Vagina (tissue), 2 donors: ENCODE measurements at regions of chr16 and their contacts with region 1.

Region 1: DNA sequence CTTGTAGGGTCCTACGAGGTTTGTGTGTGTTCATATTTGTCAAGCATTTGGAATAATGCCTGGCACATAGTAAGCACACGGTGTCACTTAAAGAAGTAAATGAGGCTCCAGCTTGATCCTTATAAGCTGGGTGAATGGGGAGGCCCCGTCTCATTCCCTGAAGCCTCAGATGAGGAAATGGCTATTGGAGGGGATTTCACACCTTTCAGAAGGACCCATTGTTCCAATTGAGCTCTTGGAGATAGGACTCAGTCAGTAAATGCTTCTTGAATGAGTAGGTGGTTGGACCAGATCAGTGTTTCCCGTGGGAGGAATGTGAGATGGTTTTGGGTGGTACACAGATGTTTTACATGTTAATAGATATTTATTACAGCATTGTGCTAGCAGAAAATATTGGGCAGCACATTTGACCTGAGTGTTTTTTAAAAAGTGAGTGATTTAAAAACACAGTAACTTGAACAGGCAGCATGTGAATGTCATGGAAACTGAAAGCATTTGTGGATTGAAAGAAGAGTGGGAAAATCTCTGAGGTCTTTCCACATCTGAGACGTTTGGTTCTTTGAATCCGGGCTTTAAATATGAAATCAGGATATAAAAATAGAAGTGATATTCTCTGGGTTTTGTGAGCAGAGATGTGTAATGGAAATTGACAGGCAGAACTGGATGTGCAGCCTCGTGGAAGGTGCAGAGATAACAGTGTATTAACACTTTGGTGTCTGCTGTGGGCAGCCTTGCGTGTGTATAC is 36.4 kb upstream of the ARHGAP17 start:
- DNase-seq: no peak
- H3K4me3 ChIP-seq: no peak overlapping the region
- H3K27ac ChIP-seq: peak overlapping the region; percentile 48
- H3K4me1 ChIP-seq: peaks cover 31% of the 10 kb centered on the region
- H3K27me3 ChIP-seq: no peaks in the 10 kb centered on the region
- CTCF ChIP-seq: no peak
- POLR2A ChIP-seq: no peak

Region 2: GRCh38 chr16:25126820-25127232 is 75.2 kb after region 1 on chr16:
- intact Hi-C with region 1: loop called (anchors 1 kb)
- DNase-seq: no peak
- H3K4me3 ChIP-seq: no peak overlapping the region
- H3K27ac ChIP-seq: no peak overlapping the region
- H3K4me1 ChIP-seq: peaks cover 18% of the 10 kb centered on the region
- H3K27me3 ChIP-seq: no peaks in the 10 kb centered on the region
- CTCF ChIP-seq: no peak
- POLR2A ChIP-seq: no peak

Region 3: DNA sequence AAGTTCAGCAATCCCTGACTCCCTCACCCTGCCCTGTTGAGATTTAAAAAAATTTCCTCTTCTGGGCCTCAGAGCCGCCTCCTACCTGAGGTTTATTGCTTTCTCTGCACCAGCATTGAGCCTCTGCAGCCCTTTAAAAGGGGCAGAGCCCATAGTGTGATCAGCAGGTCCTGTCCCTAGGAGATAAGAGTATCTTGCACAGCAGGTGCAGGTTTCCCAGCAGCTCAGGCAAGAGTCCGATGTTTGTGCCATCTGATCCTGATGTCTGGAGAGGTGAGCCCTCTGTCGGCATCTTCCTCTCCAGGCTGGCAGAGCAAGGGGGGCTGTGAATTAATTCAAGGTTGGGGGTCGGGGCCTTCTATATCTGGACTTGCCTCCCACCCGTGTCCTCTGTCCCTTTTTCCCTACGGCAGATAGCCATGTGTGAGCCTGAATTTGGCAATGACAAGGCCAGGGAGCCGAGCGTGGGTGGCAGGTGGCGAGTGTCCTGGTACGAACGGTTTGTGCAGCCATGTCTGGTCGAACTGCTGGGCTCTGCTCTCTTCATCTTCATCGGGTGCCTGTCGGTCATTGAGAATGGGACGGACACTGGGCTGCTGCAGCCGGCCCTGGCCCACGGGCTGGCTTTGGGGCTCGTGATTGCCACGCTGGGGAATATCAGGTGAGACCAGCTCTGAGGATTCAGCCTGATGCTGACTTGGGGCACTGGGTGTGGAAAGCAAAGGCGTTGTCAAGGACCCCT is 165.4 kb after region 1 on chr16 and contains the start of gene AQP8:
- intact Hi-C with region 1: loop called (anchors 5 kb)
- DNase-seq: no peak
- H3K4me3 ChIP-seq: no peak within 1 kb of the TSS
- H3K27ac ChIP-seq: no peak within 1 kb of the TSS
- H3K4me1 ChIP-seq: no peaks in the 10 kb centered on the region
- H3K27me3 ChIP-seq: no peaks in the 10 kb centered on the region
- CTCF ChIP-seq: no peak
- POLR2A ChIP-seq: no peak
- total RNA-seq, gene AQP8: not detected